ENCODE measurements at regions of chr17 and their contacts with region 1.

Region 1: GRCh38 chr17:62164763-62165753 is 100.0 kb upstream of the MED13 start:
- DNase-seq: peak in 1 of 2 experiments; percentile 92
- H3K4me3 ChIP-seq: 0 out of 2 replicates have a peak overlapping the region, but pooled peaks have one; percentile 6
- H3K27ac ChIP-seq: peak overlapping the region; percentile 90
- H3K4me1 ChIP-seq: peaks cover 53% of the 10 kb centered on the region
- H3K27me3 ChIP-seq: no peaks in the 10 kb centered on the region
- CTCF ChIP-seq: no peak

Region 2: GRCh38 chr17:62206543-62206942 is 41.5 kb after region 1 on chr17:
- CTCF ChIA-PET with region 1: no interaction called
- POLR2A ChIA-PET with region 1: interaction called, 16 read pairs
- intact Hi-C with region 1: no loop called
- DNase-seq: no peak
- H3K4me3 ChIP-seq: no peak overlapping the region
- H3K27ac ChIP-seq: no peak overlapping the region
- H3K4me1 ChIP-seq: no peaks in the 10 kb centered on the region
- H3K27me3 ChIP-seq: no peaks in the 10 kb centered on the region
- CTCF ChIP-seq: no peak

Region 3: GRCh38 chr17:62219221-62219899 is 54.3 kb after region 1 on chr17:
- CTCF ChIA-PET with region 1: no interaction called
- POLR2A ChIA-PET with region 1: no interaction called
- intact Hi-C with region 1: no loop called
- DNase-seq: no peak
- H3K4me3 ChIP-seq: no peak overlapping the region
- H3K27ac ChIP-seq: no peak overlapping the region
- H3K4me1 ChIP-seq: no peaks in the 10 kb centered on the region
- H3K27me3 ChIP-seq: no peaks in the 10 kb centered on the region
- CTCF ChIP-seq: no peak